Activated CD4-positive, alpha-beta T cell treated with anti-CD3 and anti-CD28 coated beads for 36 hours (primary cell): ENCODE measurements at regions of chr12 and their contacts with region 1.

Region 1: GRCh38 chr12:90978117-90978770 is 23.3 kb upstream of the CCER1 start:
- DNase-seq: no peak
- ATAC-seq: no peak
- H3K4me3 Mint-ChIP-seq: no peak overlapping the region
- H3K27ac Mint-ChIP-seq: no peak overlapping the region
- H3K4me1 Mint-ChIP-seq: no peaks in the 10 kb centered on the region
- H3K27me3 Mint-ChIP-seq: peaks cover 5% of the 10 kb centered on the region

Region 2: GRCh38 chr12:90808538-90808937 is 169.7 kb before region 1 on chr12:
- CTCF ChIA-PET with region 1: no interaction called
- POLR2A ChIA-PET with region 1: no interaction called
- intact Hi-C with region 1: no loop called
- DNase-seq: no peak
- ATAC-seq: no peak
- H3K4me3 Mint-ChIP-seq: no peak overlapping the region
- H3K27ac Mint-ChIP-seq: no peak overlapping the region
- H3K4me1 Mint-ChIP-seq: no peaks in the 10 kb centered on the region
- H3K27me3 Mint-ChIP-seq: no peaks in the 10 kb centered on the region

Region 3: DNA sequence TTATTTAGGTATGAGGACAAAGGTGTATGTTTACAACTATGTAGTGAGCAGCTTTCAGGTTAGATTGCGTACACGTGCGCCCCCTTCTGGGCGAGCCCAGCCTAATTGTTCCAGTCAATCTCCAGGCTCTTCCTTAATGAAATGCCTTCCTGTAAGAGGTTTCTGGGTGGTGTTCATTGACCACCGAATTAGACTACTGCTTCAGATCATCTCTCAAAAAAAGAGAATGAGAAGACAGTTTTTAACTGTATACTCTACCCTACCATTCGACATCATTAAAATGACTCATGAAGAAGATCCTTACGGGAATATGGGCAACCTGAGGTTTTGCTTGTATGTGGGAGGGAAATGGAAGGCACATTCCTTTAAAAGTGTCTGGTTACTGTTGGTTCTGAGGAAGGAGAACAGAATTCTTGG is 130.9 kb after region 1 on chr12:
- CTCF ChIA-PET with region 1: interaction called, 28 read pairs
- POLR2A ChIA-PET with region 1: no interaction called
- intact Hi-C with region 1: loop called (anchors 1 kb)
- DNase-seq: peak; percentile 79
- ATAC-seq: no peak
- H3K4me3 Mint-ChIP-seq: no peak overlapping the region
- H3K27ac Mint-ChIP-seq: no peak overlapping the region
- H3K4me1 Mint-ChIP-seq: no peaks in the 10 kb centered on the region
- H3K27me3 Mint-ChIP-seq: peaks cover 5% of the 10 kb centered on the region

Region 4: GRCh38 chr12:91140026-91140931 is 162.0 kb after region 1 on chr12:
- CTCF ChIA-PET with region 1: no interaction called
- POLR2A ChIA-PET with region 1: no interaction called
- intact Hi-C with region 1: no loop called
- DNase-seq: no peak
- ATAC-seq: no peak
- H3K4me3 Mint-ChIP-seq: no peak overlapping the region
- H3K27ac Mint-ChIP-seq: no peak overlapping the region
- H3K4me1 Mint-ChIP-seq: no peaks in the 10 kb centered on the region
- H3K27me3 Mint-ChIP-seq: peaks cover 4% of the 10 kb centered on the region

Region 5: DNA sequence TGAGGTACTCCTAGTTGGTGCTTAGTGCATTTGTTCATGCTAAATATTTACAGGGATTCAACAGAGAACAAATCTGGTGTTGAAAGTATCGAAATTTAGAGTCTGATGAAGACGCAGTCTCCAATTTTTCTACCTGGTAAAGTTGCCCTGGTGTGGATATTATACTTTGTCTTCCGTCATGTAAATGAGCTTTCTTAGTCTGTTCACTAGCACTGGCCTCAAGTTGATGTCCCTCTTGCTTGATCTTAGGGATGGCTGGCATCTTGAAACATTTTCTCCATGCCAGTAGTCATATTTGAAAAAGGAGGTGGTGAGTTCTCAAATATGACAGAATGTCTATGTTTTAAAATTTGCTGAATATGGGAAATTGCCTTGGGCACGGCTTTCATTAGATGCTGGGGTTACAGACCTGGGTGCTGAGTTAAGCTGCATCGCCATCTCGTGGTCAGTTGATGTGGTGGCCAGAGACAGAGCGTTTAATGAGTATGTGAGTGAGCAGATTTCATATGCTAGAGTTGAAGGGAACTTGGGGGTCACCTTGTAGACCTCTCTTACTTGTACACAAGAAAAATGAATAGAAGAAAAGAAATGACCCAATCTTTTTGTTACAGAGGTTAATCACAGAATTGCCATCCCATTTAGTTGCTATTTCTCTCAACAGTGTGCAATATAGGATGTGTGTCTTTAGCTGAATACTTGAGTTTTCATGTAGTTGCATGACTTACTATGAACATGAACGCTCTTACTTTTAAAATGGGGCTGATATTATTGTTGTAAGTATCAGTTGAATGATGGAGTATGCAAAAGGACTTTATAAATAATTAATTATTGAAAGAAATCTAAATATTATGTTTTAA is 377.1 kb after region 1 on chr12:
- CTCF ChIA-PET with region 1: interaction called, 5 read pairs
- POLR2A ChIA-PET with region 1: no interaction called
- intact Hi-C with region 1: loop called (anchors 2 to 10 kb)
- DNase-seq: peak; percentile 71
- ATAC-seq: peak; percentile 90
- H3K4me3 Mint-ChIP-seq: no peak overlapping the region
- H3K27ac Mint-ChIP-seq: no peak overlapping the region
- H3K4me1 Mint-ChIP-seq: no peaks in the 10 kb centered on the region
- H3K27me3 Mint-ChIP-seq: peaks cover 13% of the 10 kb centered on the region